ENCODE measurements at regions of chr5 and their contacts with region 1.

Region 1: GRCh38 chr5:142655339-142656267 is 30.3 kb downstream of the FGF1 start:
- DNase-seq: peak; percentile 33
- ATAC-seq: peak; percentile 98
- H3K4me3 ChIP-seq: no peak overlapping the region
- H3K27ac ChIP-seq: no peak overlapping the region
- H3K4me1 ChIP-seq: peaks cover 0 to 3% of the 10 kb centered on the region in 2 experiments; a peak in 1 of 4 replicates
- H3K27me3 ChIP-seq: no peaks in the 10 kb centered on the region
- CTCF ChIP-seq: peak; percentile 96 to 99 (median 96)
- POLR2A ChIP-seq: no peak
- RAD21 ChIP-seq: peak; percentile 99

Region 2: GRCh38 chr5:142151436-142152383 is 503.9 kb before region 1 on chr5:
- CTCF ChIA-PET with region 1: interaction called, 15 read pairs
- POLR2A ChIA-PET with region 1: no interaction called
- RAD21 ChIA-PET with region 1: no interaction called
- intact Hi-C with region 1: loop called (anchors 2 kb)
- DNase-seq: peak; percentile 63
- ATAC-seq: peak; percentile 87
- H3K4me3 ChIP-seq: no peak overlapping the region
- H3K27ac ChIP-seq: no peak overlapping the region
- H3K4me1 ChIP-seq: peaks cover 2 to 10% of the 10 kb centered on the region in 2 experiments; a peak in 2 of 4 replicates
- H3K27me3 ChIP-seq: no peaks in the 10 kb centered on the region
- CTCF ChIP-seq: peak; percentile 79 to 93 (median 90)
- POLR2A ChIP-seq: no peak
- RAD21 ChIP-seq: peak; percentile 92

Region 3: DNA sequence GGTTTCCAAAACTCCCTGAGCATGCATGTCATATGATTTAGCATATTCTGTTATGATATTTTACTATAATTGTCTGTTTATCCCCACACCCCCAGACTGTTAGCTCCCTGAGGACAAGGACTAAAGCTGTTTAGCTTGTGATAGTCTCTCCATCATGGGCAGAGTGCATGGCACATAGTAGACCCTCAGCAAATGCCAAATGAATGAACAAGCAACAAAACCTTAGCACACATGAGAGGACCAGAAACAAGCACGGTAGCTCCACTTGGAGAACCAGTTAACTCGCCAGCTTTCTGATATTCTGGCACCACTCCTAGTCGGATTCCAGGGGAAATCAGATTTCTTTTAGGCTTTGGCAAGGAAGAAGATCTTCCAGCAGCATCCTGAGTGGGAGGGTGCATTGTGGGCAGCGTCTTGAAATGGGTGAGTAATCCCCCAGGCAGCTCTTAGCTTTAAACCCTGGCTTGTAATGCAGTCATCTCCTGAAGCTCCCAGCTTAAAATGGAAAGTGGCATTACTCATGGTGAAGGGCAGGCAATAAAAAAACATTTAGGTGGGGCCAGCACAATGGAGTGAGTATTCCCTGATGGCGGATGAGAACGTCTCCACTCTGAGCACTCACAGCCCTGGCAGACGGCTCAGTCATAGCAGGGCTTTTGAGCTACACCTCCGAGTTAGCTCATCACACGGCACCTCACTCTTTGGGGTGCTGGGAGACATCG is 10.8 kb before region 1 on chr5:
- CTCF ChIA-PET with region 1: interaction called, 41 read pairs
- POLR2A ChIA-PET with region 1: interaction called, 4 read pairs
- RAD21 ChIA-PET with region 1: interaction called in 1 of 2 experiments, 3 read pairs
- intact Hi-C with region 1: no loop called
- DNase-seq: peak; percentile 96
- ATAC-seq: peak; percentile 91
- H3K4me3 ChIP-seq: peak overlapping the region; percentile 12 to 41
- H3K27ac ChIP-seq: peak overlapping the region; percentile 72
- H3K4me1 ChIP-seq: peaks cover 23 to 34% of the 10 kb centered on the region in 2 experiments
- H3K27me3 ChIP-seq: no peaks in the 10 kb centered on the region
- CTCF ChIP-seq: no peak
- POLR2A ChIP-seq: no peak
- RAD21 ChIP-seq: no peak; the same call in 1 of the 2 replicates

Region 4: GRCh38 chr5:142692321-142692894 is 36.8 kb after region 1 on chr5:
- CTCF ChIA-PET with region 1: interaction called, 83 read pairs
- POLR2A ChIA-PET with region 1: no interaction called
- RAD21 ChIA-PET with region 1: interaction called, 23 to 25 read pairs
- intact Hi-C with region 1: no loop called
- DNase-seq: no peak
- ATAC-seq: no peak
- H3K4me3 ChIP-seq: no peak overlapping the region
- H3K27ac ChIP-seq: no peak overlapping the region
- H3K4me1 ChIP-seq: no peaks in the 10 kb centered on the region
- H3K27me3 ChIP-seq: no peaks in the 10 kb centered on the region
- CTCF ChIP-seq: no peak
- POLR2A ChIP-seq: no peak
- RAD21 ChIP-seq: no peak

Region 5: DNA sequence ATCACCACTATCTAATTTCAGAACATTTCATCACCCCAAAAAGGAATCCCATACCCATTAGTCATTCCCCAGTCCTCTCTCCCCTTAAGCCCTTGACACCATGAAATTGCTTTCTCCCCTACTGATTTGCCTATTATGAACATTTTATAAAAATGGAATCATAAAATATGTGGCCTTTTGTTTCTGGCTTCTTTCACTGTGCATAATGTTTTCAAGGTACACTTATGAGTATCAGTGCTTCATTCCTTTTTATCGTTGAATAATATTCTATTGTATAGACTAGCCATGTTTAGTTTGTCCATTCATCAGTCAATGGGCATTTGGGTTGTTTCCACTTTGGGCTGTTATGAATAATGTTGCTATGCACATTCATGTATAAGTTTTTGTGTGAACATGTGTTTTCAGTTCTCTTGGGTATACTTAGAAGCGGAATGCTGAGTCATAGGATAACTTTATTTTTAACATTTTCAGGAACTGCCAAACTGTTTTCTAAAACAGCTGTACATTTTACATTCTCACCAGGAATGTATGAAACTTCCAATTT is 70.7 kb after region 1 on chr5:
- CTCF ChIA-PET with region 1: no interaction called
- POLR2A ChIA-PET with region 1: no interaction called
- RAD21 ChIA-PET with region 1: no interaction called
- intact Hi-C with region 1: no loop called
- DNase-seq: no peak
- ATAC-seq: no peak
- H3K4me3 ChIP-seq: no peak overlapping the region
- H3K27ac ChIP-seq: no peak overlapping the region
- H3K4me1 ChIP-seq: peaks cover 0 to 10% of the 10 kb centered on the region in 2 experiments; a peak in 2 of 4 replicates
- H3K27me3 ChIP-seq: no peaks in the 10 kb centered on the region
- CTCF ChIP-seq: no peak
- POLR2A ChIP-seq: no peak
- RAD21 ChIP-seq: no peak

Region 6: GRCh38 chr5:142881076-142881783 is 225.6 kb after region 1 on chr5:
- CTCF ChIA-PET with region 1: interaction called, 3 read pairs
- POLR2A ChIA-PET with region 1: no interaction called
- RAD21 ChIA-PET with region 1: no interaction called
- intact Hi-C with region 1: loop called (anchors 2 kb)
- DNase-seq: no peak
- ATAC-seq: 0 out of 2 replicates have a peak, but pooled peaks have one; percentile 26
- H3K4me3 ChIP-seq: no peak overlapping the region
- H3K27ac ChIP-seq: no peak overlapping the region
- H3K4me1 ChIP-seq: peaks cover 12 to 14% of the 10 kb centered on the region in 2 experiments; a peak in 3 of 4 replicates
- H3K27me3 ChIP-seq: no peaks in the 10 kb centered on the region
- CTCF ChIP-seq: no peak
- POLR2A ChIP-seq: no peak
- RAD21 ChIP-seq: no peak

Measured in HCT116 (cell line).